Colonic mucosa (tissue), 4 donors: ENCODE measurements at regions of chr6 and their contacts with region 1.

Region 1: GRCh38 chr6:131949909-131950766 is 1.0 kb downstream of the CCN2 start:
- DNase-seq: peak; percentile 83
- H3K4me3 ChIP-seq: peak overlapping the region; percentile 57
- H3K27ac ChIP-seq: peak overlapping the region; percentile 76
- H3K4me1 ChIP-seq: no peaks in the 10 kb centered on the region
- H3K27me3 ChIP-seq: no peaks in the 10 kb centered on the region
- CTCF ChIP-seq: no peak

Region 2: GRCh38 chr6:131348319-131348971 is 601.7 kb before region 1 on chr6:
- intact Hi-C with region 1: no loop called
- DNase-seq: no peak
- H3K4me3 ChIP-seq: no peak overlapping the region
- H3K27ac ChIP-seq: no peak overlapping the region
- H3K4me1 ChIP-seq: no peaks in the 10 kb centered on the region
- H3K27me3 ChIP-seq: no peaks in the 10 kb centered on the region
- CTCF ChIP-seq: no peak

Region 3: DNA sequence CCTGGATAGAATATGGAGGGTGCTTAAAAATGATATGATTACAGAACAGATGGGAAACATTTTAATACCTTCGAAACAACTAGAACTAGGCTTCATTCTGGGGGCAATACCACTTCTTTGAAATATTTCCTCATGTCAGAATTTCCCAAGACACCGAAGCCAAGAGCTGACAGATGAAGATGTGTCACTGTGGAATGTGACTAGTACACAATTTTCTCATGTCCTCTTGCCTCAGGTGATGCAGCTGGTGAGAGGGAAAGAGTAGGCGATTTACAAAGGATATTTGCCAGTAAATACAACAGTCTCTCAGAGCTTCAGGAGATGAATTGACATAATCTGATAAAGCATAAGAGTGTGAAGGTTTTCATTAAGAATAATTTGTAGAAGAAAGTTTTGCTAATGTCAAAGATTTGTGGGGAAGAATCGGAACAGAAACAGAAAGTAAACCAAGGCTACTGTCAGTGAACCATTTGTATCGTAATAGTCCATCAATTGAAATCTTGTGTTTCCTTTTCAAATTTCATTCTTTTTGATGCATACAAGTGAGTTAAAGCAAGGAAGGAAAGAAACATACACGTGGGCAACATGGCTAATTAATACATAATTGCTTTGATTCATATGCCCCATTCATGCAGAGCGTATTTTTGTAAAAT is 165.7 kb after region 1 on chr6:
- intact Hi-C with region 1: no loop called
- DNase-seq: no peak
- H3K4me3 ChIP-seq: no peak overlapping the region
- H3K27ac ChIP-seq: no peak overlapping the region
- H3K4me1 ChIP-seq: no peaks in the 10 kb centered on the region
- H3K27me3 ChIP-seq: no peaks in the 10 kb centered on the region
- CTCF ChIP-seq: no peak

Region 4: DNA sequence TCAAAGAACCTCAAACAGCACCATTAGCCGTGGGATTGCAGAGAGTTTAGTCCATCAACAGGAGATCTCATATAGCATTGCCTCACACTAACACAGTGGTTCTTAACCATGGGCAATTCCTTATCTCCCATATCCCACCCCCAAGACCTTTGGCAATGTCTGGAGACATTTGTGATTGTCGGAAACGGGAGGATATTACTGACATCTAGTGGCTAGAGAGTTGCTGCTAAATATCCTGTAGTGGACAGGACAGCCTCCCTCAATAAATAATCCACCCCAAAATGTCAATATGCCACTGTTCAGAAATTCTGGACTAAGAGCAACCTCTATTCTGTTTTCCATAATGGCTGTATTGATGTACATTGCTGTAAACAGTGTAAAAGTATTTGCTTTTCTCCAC is 211.1 kb after region 1 on chr6:
- intact Hi-C with region 1: loop called (anchors 5 kb)
- DNase-seq: no peak
- H3K4me3 ChIP-seq: no peak overlapping the region
- H3K27ac ChIP-seq: no peak overlapping the region
- H3K4me1 ChIP-seq: no peaks in the 10 kb centered on the region
- H3K27me3 ChIP-seq: no peaks in the 10 kb centered on the region
- CTCF ChIP-seq: peak; percentile 49